ENCODE measurements at regions of chr7 and their contacts with region 1.

Region 1: DNA sequence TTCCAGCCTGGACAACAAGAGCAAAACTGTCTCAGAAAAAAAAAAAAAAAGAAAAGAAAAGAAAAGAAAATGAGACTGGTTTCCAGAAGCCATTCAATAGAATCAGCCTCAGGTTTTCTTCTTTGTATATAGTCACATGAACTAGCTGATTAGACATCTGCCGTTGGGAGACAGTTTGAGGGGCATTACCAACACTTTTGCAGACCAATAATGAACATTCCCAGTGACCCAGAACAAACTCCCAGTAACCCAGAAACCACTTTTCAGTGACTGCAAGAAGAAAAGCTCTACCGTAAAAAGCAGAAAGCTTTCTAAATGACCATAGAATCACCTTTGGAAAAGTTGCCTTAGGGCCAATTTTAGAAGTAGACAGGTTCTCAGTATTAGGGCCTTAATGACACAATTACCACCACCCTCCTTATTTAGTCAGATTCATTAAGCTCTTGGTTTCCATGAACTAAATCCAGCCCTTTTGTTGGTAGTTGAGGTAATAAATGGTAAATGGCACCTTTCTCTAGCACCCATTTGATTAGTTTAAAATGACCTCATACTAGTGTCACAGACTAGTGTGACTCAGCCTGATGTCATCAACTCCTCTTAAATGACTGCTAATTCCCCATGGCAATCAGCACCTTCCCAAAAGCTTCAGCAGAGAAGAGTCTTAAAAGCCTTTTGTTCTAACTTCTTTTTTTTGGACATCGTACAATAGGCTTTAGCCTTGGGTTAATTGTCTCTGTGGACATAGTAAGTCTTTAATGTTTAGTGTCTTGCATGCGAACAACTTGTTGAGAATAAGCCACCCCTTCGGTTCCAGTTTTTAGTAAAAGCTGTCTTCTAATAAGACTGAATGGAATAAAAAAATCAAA is 33.6 kb upstream of the XRCC2 start:
- DNase-seq: no peak
- ATAC-seq: no peak
- H3K4me3 ChIP-seq: no peak overlapping the region
- H3K27ac ChIP-seq: no peak overlapping the region
- H3K4me1 ChIP-seq: peaks cover 12% of the 10 kb centered on the region
- H3K27me3 ChIP-seq: no peaks in the 10 kb centered on the region
- CTCF ChIP-seq: no peak
- EP300 ChIP-seq: no peak
- POLR2A ChIP-seq: no peak
- RAD21 ChIP-seq: no peak

Region 2: DNA sequence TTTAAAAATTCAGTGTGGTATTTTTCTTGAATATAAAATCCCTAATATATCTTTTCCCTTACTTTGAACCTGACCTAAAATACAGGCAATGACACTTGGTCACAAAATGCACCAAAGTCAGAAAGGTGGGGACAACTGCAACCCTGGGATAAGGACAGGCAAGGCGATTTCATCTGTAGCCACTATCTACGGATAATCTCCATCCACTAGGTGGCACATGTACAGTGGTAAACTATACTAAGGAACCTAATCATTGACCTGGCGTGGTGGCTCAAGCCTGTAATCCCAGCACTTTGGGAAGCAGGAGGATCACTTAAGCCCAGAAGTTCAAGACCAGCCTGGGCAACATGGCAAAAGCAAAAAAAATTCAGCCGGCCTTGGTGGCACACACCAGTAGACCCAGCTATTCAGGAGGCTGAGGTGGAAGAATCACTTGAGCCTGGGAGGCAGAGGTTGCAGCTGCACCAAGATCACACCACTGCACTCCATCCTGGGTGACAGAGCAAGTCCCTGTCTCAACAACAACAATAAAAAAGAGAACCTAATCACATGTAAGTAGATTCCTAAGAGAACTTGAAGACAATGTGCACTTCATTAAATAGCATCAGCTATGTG is 372.7 kb before region 1 on chr7:
- CTCF ChIA-PET with region 1: interaction called, 11 read pairs
- POLR2A ChIA-PET with region 1: no interaction called
- in situ Hi-C with region 1: loop called (anchors 10 kb)
- intact Hi-C with region 1: loop called (anchors 1 kb)
- DNase-seq: peak; percentile 53
- ATAC-seq: peak; percentile 96
- H3K4me3 ChIP-seq: no peak overlapping the region
- H3K27ac ChIP-seq: no peak overlapping the region
- H3K4me1 ChIP-seq: peaks cover 11% of the 10 kb centered on the region
- H3K27me3 ChIP-seq: no peaks in the 10 kb centered on the region
- CTCF ChIP-seq: peak; percentile 75
- EP300 ChIP-seq: no peak
- POLR2A ChIP-seq: no peak
- RAD21 ChIP-seq: peak; percentile 45; the same call in 1 of the 2 replicates